Activated CD4-positive, alpha-beta memory T cell treated with anti-CD3 and anti-CD28 coated beads for 36 hours (primary cell): ENCODE measurements at regions of chr13 and their contacts with region 1.

Region 1: DNA sequence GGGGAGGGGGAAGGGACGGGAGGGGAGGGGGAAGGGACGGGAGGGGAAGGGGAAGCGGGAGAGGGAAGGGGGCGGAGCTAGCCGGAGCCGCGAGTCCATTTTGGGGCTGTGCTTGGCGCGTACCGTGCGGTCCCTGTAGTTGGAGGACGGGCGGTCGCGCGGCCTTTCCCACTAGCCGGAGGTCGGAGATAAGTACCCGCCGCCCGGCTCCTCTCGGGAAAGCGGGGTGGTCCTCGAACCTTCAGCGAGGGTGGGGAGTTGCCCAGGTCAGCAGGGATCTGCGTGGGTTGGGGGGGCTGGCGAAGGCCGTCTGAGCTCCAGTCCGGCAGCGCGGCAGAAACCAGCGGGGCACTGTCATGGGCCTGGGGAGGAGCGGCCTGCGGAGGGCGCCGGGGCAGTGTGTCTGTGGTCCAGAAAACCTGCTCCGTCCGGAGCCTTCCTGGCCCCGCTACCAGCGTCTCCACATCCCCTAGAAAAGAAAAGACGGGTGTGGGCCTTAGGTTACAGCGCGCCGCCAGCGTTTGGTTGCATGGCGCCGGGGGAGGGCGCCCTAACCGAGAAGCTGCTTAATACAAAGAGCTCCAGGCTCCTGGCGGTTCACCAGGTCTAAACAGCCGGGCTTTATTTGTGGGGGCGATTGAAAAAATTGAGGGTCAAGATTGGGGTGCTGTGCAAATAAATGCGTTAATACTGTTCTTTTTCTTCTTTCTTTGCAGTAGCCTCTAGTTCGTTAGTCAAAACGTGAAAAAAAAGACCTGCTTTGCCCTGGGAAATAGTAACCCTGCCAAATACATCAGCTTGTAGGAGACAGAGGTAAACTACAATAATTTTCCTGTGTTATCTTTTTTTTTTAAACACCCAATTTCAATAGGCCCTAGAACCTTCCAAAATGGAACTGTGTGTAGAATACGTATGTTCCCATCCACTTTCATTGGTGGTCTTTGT is at the start of gene TRIM13:
- DNase-seq: peak; percentile 88
- H3K4me3 Mint-ChIP-seq: peak within 1 kb of the TSS; percentile 81
- H3K27ac Mint-ChIP-seq: peak within 1 kb of the TSS; percentile 86
- H3K4me1 Mint-ChIP-seq: peaks cover 44% of the 10 kb centered on the region
- H3K27me3 Mint-ChIP-seq: no peaks in the 10 kb centered on the region
- total RNA-seq, gene TRIM13: 9.8 to 11.6 TPM

Region 2: DNA sequence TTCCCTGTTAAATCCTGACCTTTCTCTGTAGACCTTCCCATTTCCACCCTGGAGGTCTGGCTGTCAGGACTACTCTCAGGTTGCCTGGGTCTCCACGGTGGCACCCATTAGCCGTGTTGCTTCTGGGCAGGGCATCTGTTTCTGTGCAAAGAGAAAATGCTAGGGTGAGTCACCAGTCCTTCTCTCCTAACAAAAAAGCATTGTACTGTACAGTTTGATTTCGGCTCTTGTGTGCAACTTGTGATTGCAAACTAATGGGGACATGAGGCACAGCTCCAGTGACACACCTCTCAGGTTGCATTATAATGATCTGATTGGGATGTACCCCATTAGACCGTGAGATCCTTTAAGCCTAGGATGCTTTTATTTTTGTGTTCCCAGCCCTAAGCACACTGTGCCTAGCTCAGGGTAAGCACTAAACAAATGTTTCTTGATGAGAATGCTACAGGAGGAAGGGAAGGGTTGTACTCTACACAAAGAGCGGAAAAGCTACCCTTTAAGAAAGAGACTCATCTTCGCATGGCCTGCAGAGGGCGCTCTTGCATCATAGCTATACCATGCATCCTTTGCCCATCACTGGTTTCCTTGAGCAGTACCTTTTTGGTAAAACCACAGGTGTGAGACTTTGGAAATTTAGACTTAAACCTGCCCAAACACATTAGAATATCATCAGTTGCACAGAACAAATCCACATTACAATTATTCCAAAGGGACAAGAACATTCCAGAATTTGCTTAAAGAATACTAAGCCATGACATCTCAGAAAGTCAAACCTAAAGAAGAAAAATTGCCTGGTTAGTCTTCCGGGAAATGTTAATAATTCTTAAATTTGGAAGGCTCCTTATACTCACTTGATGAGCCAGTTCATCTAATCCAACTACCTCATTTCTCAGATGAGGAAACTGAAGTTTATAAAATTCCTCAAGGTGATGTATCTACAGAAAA is 20.6 kb before region 1 on chr13:
- CTCF ChIA-PET with region 1: interaction called, 21 read pairs
- POLR2A ChIA-PET with region 1: no interaction called
- intact Hi-C with region 1: no loop called
- DNase-seq: peak; percentile 81
- H3K4me3 Mint-ChIP-seq: no peak overlapping the region
- H3K27ac Mint-ChIP-seq: no peak overlapping the region
- H3K4me1 Mint-ChIP-seq: peaks cover 2% of the 10 kb centered on the region
- H3K27me3 Mint-ChIP-seq: no peaks in the 10 kb centered on the region

Region 3: DNA sequence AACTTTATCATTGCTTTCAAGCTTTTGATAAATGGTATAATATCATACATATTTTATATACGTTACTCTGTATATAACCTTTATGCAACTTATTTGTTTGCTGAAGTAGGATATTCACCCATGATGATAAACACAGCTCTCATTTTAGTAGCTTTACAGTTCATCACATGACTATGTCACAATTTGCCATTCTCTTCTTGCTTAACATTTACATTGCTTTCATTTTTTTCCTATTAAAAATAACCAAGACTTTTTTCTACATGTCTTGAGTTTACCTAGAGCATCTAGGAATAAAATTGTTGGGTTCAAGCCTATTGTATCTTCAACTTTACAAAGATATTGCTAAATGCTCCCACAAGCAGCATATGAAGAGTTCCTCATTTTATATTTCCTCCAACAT is 72.0 kb after region 1 on chr13:
- CTCF ChIA-PET with region 1: interaction called, 13 read pairs
- POLR2A ChIA-PET with region 1: interaction called, 7 read pairs
- intact Hi-C with region 1: no loop called
- DNase-seq: no peak
- H3K4me3 Mint-ChIP-seq: no peak overlapping the region
- H3K27ac Mint-ChIP-seq: no peak overlapping the region
- H3K4me1 Mint-ChIP-seq: peaks cover 10% of the 10 kb centered on the region
- H3K27me3 Mint-ChIP-seq: no peaks in the 10 kb centered on the region

Region 4: GRCh38 chr13:50222569-50223332 is 225.5 kb after region 1 on chr13:
- CTCF ChIA-PET with region 1: interaction called, 15 read pairs
- POLR2A ChIA-PET with region 1: no interaction called
- intact Hi-C with region 1: no loop called
- DNase-seq: peak; percentile 45
- H3K4me3 Mint-ChIP-seq: peak overlapping the region; percentile 57
- H3K27ac Mint-ChIP-seq: no peak overlapping the region
- H3K4me1 Mint-ChIP-seq: peaks cover 61% of the 10 kb centered on the region
- H3K27me3 Mint-ChIP-seq: peaks cover 47% of the 10 kb centered on the region

Region 5: GRCh38 chr13:50531917-50532899 is 535.0 kb after region 1 on chr13:
- CTCF ChIA-PET with region 1: interaction called, 3 read pairs
- POLR2A ChIA-PET with region 1: no interaction called
- intact Hi-C with region 1: loop called (anchors 5 kb)
- DNase-seq: no peak
- H3K4me3 Mint-ChIP-seq: no peak overlapping the region
- H3K27ac Mint-ChIP-seq: no peak overlapping the region
- H3K4me1 Mint-ChIP-seq: peaks cover 15% of the 10 kb centered on the region
- H3K27me3 Mint-ChIP-seq: no peaks in the 10 kb centered on the region

Region 6: DNA sequence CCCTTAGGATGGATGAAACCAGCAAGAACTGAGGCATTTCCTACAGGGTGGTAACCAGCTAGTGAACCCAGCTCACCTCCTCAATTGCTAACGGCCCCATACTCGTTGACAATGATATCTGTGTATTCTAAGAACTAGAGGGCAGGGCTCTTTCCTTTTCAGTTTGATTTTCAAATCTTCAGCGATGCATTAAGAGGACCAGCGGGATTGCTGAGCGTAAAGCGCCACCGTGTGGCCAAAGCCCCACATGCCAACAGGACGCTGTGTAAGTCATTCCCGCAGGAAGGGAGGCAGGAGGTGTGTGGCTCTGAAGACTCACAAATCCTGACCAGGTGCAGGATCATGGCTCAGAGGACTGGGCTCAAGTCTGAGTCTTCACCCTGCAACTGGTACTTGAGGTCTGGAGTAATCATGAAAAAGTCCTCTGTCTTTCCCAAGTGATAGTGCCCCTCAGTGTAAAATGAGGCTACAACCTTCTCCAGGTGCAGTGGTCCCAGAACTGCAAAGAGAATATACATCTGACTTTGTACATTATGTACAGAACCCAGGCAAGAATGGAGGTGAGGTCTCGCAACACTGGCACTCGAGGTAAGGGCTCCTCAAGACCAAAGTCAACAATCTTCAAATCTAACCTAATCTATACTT is 1072.9 kb after region 1 on chr13:
- CTCF ChIA-PET with region 1: no interaction called
- POLR2A ChIA-PET with region 1: no interaction called
- intact Hi-C with region 1: loop called (anchors 5 kb)
- DNase-seq: peak; percentile 86
- H3K4me3 Mint-ChIP-seq: no peak overlapping the region
- H3K27ac Mint-ChIP-seq: no peak overlapping the region
- H3K4me1 Mint-ChIP-seq: peaks cover 5% of the 10 kb centered on the region
- H3K27me3 Mint-ChIP-seq: peaks cover 18% of the 10 kb centered on the region